GM10248 (cell line): ENCODE measurements at regions of chr11 and their contacts with region 1.

Region 1: DNA sequence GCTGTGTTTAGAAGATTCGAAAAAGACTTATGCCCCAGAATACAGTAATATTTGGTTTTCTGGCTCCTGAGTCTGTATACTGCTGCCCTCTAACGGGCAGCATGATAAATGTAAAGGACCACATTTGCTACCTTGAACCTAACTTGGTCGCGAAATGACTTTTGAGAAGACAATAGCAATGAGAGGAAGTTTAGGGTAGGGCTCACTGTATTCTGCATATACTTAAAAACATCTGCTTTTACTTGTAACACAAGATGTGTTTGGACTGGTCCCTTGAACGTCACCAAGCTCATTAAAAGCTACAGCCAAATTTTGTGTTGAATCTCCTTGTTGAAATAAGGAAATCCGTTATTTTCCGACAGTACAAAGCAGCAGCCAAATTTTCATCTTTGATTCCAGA is 309.1 kb downstream of the SWAP70 start:
- DNase-seq: peak; percentile 77
- CTCF ChIP-seq: peak; percentile 66

Region 2: GRCh38 chr11:9757809-9758636 is 215.0 kb before region 1 on chr11:
- CTCF ChIA-PET with region 1: interaction called, 24 read pairs
- POLR2A ChIA-PET with region 1: no interaction called
- DNase-seq: peak; percentile 97
- CTCF ChIP-seq: peak; percentile 92

Region 3: DNA sequence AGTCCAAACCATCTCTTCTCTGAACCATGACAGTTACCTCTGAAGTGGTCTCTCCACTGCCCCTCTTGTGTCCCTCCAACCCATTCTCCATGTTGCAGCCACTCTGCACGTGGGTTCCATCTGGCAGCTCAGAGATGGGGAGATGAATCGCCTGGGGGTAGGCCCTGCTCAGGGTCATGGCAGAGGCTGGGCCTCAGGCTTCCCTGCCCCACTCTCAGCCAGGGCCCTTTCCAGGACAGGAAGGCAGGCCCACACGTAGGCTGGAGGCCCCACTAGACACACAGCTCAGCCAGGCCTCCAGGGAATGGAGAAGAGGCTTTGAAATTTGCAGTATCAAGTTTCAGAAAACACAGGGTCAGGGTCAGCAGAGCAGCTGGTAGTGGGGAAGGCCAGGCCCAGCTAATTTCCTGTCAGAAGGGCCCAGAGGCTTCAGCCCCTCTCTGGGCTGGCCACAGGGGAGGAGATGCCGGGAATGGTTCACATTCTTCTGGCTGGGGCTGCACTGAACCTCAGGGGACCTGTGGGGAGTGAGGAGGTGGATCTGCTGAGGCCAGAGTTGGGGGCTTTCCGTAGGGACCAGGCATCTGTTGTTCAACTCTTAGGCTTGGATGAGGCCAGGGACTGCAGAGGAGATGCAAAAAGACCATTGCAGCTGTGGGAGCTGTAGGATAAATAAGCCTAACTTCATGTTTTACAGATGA is 207.5 kb before region 1 on chr11:
- CTCF ChIA-PET with region 1: interaction called, 24 read pairs
- POLR2A ChIA-PET with region 1: no interaction called
- DNase-seq: no peak
- CTCF ChIP-seq: no peak

Region 4: GRCh38 chr11:9962722-9963121 is 10.3 kb before region 1 on chr11:
- CTCF ChIA-PET with region 1: interaction called, 21 read pairs
- POLR2A ChIA-PET with region 1: no interaction called
- DNase-seq: peak; percentile 66
- CTCF ChIP-seq: no peak

Region 5: DNA sequence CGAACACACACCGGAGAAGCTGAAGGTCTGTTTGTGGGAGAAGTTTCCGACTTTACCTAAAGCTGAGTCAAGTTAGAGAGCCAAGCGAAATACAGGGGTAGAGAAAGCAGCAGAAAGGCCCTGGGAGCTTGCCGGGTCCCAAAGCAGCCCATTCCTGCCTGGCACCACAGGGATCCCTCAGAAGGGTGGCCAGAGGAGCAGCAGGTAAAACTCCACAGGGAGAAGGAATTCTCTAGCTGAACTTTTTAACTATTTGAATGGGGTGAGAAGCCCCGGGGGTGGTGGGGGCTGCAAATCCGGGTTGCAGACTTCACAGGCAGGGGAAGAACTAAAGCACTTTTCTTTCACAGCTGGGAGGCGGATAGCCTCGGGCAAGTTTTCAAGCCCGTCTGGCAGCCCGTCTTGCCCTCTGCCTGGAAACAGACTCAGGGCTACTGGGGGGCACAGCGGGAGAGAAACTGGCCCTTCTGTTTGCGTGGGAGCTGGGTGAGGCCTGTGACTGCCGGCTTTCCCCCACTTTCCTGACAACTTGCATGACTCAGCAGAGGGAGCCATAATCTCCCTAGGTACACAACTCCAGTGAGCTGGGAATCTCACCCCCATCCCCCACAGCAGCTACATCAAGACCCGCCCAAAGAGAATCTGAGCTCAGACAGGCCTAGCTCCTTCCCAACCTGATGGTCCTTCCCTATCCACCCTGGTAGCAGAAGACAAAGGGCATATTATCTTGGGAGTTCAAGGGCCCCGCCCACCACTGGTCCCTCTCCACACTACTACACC is 10.0 kb after region 1 on chr11:
- CTCF ChIA-PET with region 1: interaction called, 29 read pairs
- POLR2A ChIA-PET with region 1: no interaction called
- DNase-seq: no peak
- CTCF ChIP-seq: no peak